B cell (primary cell): ENCODE measurements at regions of chr2 and their contacts with region 1.

Region 1: GRCh38 chr2:33583194-33583938 is 15.7 kb downstream of the FAM98A start:
- DNase-seq: peak; percentile 75
- ATAC-seq: peak; percentile 69
- H3K4me3 ChIP-seq: peak overlapping the region in 1 of 5 experiments; percentile 2
- H3K4me3 Mint-ChIP-seq: no peak overlapping the region
- H3K27ac ChIP-seq: peak overlapping the region; percentile 31 to 81
- H3K27ac Mint-ChIP-seq: peak overlapping the region; percentile 72
- H3K4me1 ChIP-seq: peaks cover 9 to 22% of the 10 kb centered on the region in 2 donors
- H3K4me1 Mint-ChIP-seq: peaks cover 17% of the 10 kb centered on the region
- H3K27me3 ChIP-seq: no peaks in the 10 kb centered on the region
- H3K27me3 Mint-ChIP-seq: no peaks in the 10 kb centered on the region
- CTCF ChIP-seq: peak; percentile 98

Region 2: GRCh38 chr2:32772638-32773447 is 810.5 kb before region 1 on chr2:
- CTCF ChIA-PET with region 1: interaction called, 4 read pairs
- POLR2A ChIA-PET with region 1: no interaction called
- intact Hi-C with region 1: loop called (anchors 1 kb)
- DNase-seq: peak; percentile 17
- ATAC-seq: no peak
- H3K4me3 ChIP-seq: no peak overlapping the region
- H3K4me3 Mint-ChIP-seq: no peak overlapping the region
- H3K27ac ChIP-seq: no peak overlapping the region
- H3K27ac Mint-ChIP-seq: no peak overlapping the region
- H3K4me1 ChIP-seq: no peaks in the 10 kb centered on the region
- H3K4me1 Mint-ChIP-seq: no peaks in the 10 kb centered on the region
- H3K27me3 ChIP-seq: no peaks in the 10 kb centered on the region
- H3K27me3 Mint-ChIP-seq: no peaks in the 10 kb centered on the region
- CTCF ChIP-seq: peak; percentile 53

Region 3: DNA sequence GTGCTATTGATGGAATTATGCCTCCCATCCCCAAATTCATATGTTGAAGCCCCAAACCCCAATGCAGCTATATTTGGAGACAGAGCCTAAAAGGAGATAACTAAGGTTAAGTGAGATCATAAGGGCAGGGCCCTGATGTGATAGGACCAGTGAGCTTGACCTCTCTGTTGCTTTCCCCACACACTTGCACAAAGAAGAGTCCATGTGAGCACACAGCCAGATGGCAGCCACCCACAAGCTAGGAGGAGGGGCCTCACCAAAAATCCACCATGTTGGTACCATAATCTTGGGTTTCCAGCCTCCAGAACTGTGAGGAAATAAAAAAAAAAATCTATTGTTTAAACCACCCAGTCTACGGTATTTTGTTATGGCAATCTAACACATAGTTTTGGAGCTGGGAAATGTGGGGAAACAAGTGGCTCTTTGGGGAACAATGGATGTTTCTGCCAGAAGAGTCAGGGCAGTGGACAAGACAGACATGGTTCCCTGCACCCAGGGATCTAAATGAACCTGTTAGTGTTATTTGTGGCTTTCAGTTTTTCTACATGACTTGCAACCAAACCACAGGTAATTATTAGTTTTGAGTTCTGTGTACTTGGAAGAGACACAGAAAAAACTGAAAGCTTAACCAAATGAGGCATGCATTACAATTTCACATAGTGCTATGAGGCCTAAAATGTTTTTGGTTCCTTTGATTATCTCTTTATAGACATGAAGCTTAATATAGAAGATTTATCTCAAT is 377.5 kb before region 1 on chr2:
- CTCF ChIA-PET with region 1: interaction called, 22 read pairs
- POLR2A ChIA-PET with region 1: no interaction called
- intact Hi-C with region 1: loop called (anchors 5 kb)
- DNase-seq: no peak
- ATAC-seq: no peak
- H3K4me3 ChIP-seq: no peak overlapping the region
- H3K4me3 Mint-ChIP-seq: no peak overlapping the region
- H3K27ac ChIP-seq: no peak overlapping the region
- H3K27ac Mint-ChIP-seq: no peak overlapping the region
- H3K4me1 ChIP-seq: no peaks in the 10 kb centered on the region
- H3K4me1 Mint-ChIP-seq: peaks cover 4% of the 10 kb centered on the region
- H3K27me3 ChIP-seq: peaks cover 0 to 4% (median 0%) of the 10 kb centered on the region in 4 experiments
- H3K27me3 Mint-ChIP-seq: peaks cover 9% of the 10 kb centered on the region
- CTCF ChIP-seq: no peak

Region 4: GRCh38 chr2:33412920-33413319 is 170.4 kb before region 1 on chr2:
- CTCF ChIA-PET with region 1: interaction called, 16 read pairs
- POLR2A ChIA-PET with region 1: no interaction called
- intact Hi-C with region 1: loop called (anchors 2 kb)
- DNase-seq: no peak
- ATAC-seq: no peak
- H3K4me3 ChIP-seq: no peak overlapping the region
- H3K4me3 Mint-ChIP-seq: no peak overlapping the region
- H3K27ac ChIP-seq: no peak overlapping the region
- H3K27ac Mint-ChIP-seq: no peak overlapping the region
- H3K4me1 ChIP-seq: no peaks in the 10 kb centered on the region
- H3K4me1 Mint-ChIP-seq: no peaks in the 10 kb centered on the region
- H3K27me3 ChIP-seq: no peaks in the 10 kb centered on the region
- H3K27me3 Mint-ChIP-seq: no peaks in the 10 kb centered on the region
- CTCF ChIP-seq: no peak

Region 5: DNA sequence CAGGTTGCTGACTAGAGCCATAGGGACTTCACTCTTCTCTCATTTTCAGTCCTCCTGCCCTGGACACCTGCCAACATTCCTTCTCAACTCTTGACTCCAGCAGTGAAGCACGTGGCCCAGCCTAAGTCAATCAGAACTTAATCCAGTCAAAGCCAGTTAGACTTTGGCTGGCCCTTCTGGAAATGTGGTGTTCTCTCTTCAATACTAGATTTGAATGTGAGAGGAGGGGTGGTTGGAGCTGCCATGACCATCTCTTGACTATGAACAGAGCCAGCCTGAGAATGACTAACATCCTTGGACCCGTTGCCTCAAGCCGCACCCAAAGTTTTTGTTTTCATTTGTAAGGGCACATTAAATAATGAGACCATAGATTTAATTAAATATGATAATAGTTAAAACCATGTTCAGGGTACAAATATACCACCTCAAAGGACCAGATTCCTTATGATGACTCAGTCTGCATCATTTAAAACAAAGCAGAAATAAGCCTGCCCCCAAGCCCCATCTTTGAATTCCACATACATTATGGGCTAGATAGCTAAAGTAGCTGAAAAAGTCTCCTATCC is 156.6 kb before region 1 on chr2:
- CTCF ChIA-PET with region 1: no interaction called
- POLR2A ChIA-PET with region 1: no interaction called
- intact Hi-C with region 1: no loop called
- DNase-seq: no peak
- ATAC-seq: no peak
- H3K4me3 ChIP-seq: no peak overlapping the region
- H3K4me3 Mint-ChIP-seq: no peak overlapping the region
- H3K27ac ChIP-seq: no peak overlapping the region
- H3K27ac Mint-ChIP-seq: no peak overlapping the region
- H3K4me1 ChIP-seq: no peaks in the 10 kb centered on the region
- H3K4me1 Mint-ChIP-seq: no peaks in the 10 kb centered on the region
- H3K27me3 ChIP-seq: no peaks in the 10 kb centered on the region
- H3K27me3 Mint-ChIP-seq: no peaks in the 10 kb centered on the region
- CTCF ChIP-seq: no peak

Region 6: DNA sequence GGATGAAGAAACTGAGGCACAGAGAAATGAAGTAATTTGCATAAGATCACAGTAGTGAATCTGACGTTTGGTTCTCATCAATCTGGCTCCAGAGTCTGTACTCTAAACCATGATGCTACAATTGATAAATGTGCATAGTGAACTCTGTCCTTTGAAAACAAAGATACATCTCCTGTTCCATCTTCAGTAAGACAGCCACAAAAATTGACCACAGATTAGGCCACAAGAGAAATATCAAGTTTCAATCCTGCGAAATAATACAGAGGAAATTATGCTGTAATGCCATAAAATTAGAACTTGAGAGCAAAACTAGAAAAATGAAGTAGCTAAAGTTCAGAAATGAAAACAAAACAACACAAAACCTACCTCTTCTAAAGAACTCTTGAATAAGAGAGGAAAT is 12.7 kb before region 1 on chr2:
- CTCF ChIA-PET with region 1: interaction called, 28 read pairs
- POLR2A ChIA-PET with region 1: no interaction called
- intact Hi-C with region 1: no loop called
- DNase-seq: no peak
- ATAC-seq: no peak
- H3K4me3 ChIP-seq: no peak overlapping the region
- H3K4me3 Mint-ChIP-seq: no peak overlapping the region
- H3K27ac ChIP-seq: no peak overlapping the region
- H3K27ac Mint-ChIP-seq: no peak overlapping the region
- H3K4me1 ChIP-seq: no peaks in the 10 kb centered on the region
- H3K4me1 Mint-ChIP-seq: no peaks in the 10 kb centered on the region
- H3K27me3 ChIP-seq: no peaks in the 10 kb centered on the region
- H3K27me3 Mint-ChIP-seq: no peaks in the 10 kb centered on the region
- CTCF ChIP-seq: no peak

Region 7: GRCh38 chr2:33616873-33617272 is 33.5 kb after region 1 on chr2:
- CTCF ChIA-PET with region 1: no interaction called
- POLR2A ChIA-PET with region 1: no interaction called
- intact Hi-C with region 1: no loop called
- DNase-seq: no peak
- ATAC-seq: no peak
- H3K4me3 ChIP-seq: no peak overlapping the region
- H3K4me3 Mint-ChIP-seq: no peak overlapping the region
- H3K27ac ChIP-seq: no peak overlapping the region
- H3K27ac Mint-ChIP-seq: no peak overlapping the region
- H3K4me1 ChIP-seq: no peaks in the 10 kb centered on the region
- H3K4me1 Mint-ChIP-seq: no peaks in the 10 kb centered on the region
- H3K27me3 ChIP-seq: no peaks in the 10 kb centered on the region
- H3K27me3 Mint-ChIP-seq: no peaks in the 10 kb centered on the region
- CTCF ChIP-seq: no peak